GM13977 (cell line): ENCODE measurements at regions of chr13 and their contacts with region 1.

Region 1: DNA sequence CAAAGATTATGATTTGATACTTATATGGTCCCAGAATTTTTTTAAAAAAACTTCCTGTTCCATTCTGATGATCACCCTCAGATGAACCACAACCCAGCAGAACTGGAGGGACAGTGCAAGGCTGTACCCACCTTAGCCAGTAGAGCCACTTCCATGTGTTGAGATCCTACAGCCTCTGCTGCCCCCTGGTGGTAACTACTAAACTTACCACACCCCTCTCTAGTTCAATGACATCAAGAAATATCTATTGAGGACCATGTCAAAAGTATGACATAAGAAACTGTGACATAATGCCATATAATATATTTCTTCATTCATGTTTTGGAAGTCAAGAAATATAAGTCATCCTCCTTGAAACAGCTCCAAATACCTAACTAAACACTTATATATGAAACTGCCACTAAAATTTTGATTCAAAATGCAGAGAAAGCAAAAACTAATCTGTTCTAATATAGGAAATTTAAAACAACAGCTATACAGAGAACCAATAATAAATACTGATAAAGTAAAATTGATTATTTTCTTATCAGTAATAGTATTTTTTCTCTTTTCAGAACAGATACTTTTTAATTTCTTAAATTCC is 412.6 kb downstream of the KCTD12 start:
- DNase-seq: peak; percentile 28
- CTCF ChIP-seq: peak; percentile 63

Region 2: DNA sequence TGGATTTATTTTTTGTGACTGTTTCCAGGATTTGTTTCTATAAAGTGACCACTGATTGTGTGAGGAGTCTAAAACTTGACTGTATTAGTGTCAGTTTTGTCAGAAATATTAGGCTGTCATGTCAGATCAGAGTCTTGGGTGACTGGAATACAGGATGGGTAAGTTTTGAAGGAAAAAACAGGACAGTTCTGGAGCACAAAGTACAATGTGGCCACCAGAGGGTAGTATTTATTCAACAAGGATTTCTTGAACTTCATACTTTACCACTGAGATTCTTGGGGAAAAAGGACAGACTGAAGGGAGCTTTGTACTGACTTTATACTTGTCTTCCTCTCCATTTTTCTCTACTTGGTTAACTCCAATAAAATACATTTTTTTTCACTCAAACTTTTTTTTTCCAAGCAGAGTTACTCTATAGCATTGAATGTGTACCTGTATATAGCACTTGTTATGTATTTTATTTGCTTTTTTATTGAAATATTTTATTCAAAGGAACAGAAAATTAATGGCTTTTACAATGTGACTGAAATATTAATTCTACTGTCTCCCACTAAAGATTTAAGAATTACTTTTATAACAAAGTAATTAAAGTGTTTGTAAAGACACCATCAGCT is 786.4 kb before region 1 on chr13:
- in situ Hi-C with region 1: loop called (anchors 25 kb)
- DNase-seq: no peak
- CTCF ChIP-seq: peak; percentile 52

Region 3: DNA sequence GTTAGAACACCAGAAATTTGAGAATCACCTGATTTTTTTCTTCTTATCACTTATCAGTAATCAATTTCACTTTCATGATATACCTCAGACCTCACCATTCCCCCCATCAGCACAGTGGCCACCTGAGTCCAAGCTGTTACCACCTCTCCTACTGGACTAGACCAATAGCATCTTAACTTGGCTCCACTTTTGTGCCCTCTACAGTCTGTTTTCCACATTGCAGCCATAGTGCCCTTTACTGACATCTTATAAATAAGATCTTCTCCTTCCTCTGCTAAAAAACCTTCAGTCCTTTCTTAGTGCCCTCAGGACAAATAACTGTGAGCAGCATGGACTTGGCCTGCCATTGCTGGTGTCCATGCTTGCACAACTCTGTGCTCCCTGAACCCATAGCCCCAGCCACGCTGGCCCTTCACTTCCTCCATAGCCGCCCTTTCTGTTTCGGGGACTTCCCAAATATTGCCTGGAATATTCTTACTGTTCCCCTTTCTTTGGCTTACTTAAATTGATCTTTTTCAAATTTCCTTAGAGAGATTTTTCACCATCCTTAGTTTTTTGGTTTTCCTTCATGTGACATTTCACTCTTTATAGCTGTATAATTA is 456.7 kb before region 1 on chr13:
- in situ Hi-C with region 1: loop called (anchors 25 kb)
- DNase-seq: peak; percentile 18
- CTCF ChIP-seq: peak; percentile 68

Region 4: GRCh38 chr13:76903544-76904162 is 430.0 kb after region 1 on chr13:
- in situ Hi-C with region 1: loop called (anchors 10 kb)
- DNase-seq: peak; percentile 59
- CTCF ChIP-seq: peak; percentile 96